Heart right ventricle (tissue), 16 donors: ENCODE measurements at regions of chr12 and their contacts with region 1.

Region 1: DNA sequence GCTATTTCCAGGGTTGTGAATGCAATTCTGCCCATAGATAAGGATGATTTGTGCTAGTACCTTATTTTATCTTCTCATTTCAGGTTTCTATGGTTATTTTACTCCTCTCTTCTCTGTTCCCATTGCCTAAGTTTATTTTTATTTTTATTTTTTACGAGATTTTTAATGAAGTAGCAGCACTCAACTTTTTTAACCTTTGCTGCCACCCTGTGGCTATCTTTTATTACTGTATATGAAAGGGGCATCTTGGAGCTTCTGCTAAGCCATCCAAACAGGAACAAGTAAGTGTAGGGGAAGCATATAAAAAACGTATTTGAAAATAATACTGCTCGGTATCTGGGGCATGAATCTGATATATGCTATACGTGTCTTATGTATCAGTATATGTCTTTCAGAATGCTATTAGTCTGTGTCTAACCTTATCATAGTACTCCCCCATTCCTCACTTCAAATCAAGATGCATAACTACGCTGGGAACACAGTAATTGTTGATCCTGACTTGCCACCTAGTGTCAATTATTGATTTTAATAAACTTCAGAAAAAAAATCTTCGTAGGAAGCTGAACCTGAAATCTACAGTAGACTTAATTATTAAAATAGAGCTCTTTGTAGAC is 60.3 kb downstream of the KLRG1 start:
- DNase-seq: no peak
- ATAC-seq: peak in 3 of 8 donors; percentile 22 to 53 (median 42)
- H3K4me3 ChIP-seq: no peak overlapping the region
- H3K27ac ChIP-seq: no peak overlapping the region
- H3K4me1 ChIP-seq: peaks cover 0 to 4% (median 0%) of the 10 kb centered on the region in 9 donors
- H3K27me3 ChIP-seq: no peaks in the 10 kb centered on the region
- CTCF ChIP-seq: peak in 8 of 9 donors; percentile 9 to 69 (median 60)

Region 2: GRCh38 chr12:8544295-8544694 is 505.3 kb before region 1 on chr12:
- intact Hi-C with region 1: loop called in 5 of 10 experiments (anchors 5 to 10 kb)
- DNase-seq: peak in 1 of 2 donors; percentile 60
- ATAC-seq: peak in 6 of 8 donors; percentile 63 to 78 (median 68)
- H3K4me3 ChIP-seq: no peak overlapping the region
- H3K27ac ChIP-seq: no peak overlapping the region
- H3K4me1 ChIP-seq: peaks cover 0 to 13% (median 0%) of the 10 kb centered on the region in 9 donors
- H3K27me3 ChIP-seq: peaks cover 0 to 20% (median 4%) of the 10 kb centered on the region in 7 donors
- CTCF ChIP-seq: peak; percentile 83 to 96 (median 93)

Region 3: GRCh38 chr12:8549381-8549780 is 500.2 kb before region 1 on chr12:
- intact Hi-C with region 1: loop called in 5 of 10 experiments (anchors 5 to 10 kb)
- DNase-seq: no peak
- ATAC-seq: no peak
- H3K4me3 ChIP-seq: no peak overlapping the region
- H3K27ac ChIP-seq: no peak overlapping the region
- H3K4me1 ChIP-seq: peaks cover 0 to 5% (median 0%) of the 10 kb centered on the region in 9 donors
- H3K27me3 ChIP-seq: peaks cover 0 to 5% (median 0%) of the 10 kb centered on the region in 7 donors
- CTCF ChIP-seq: no peak

Region 4: GRCh38 chr12:8658346-8658745 is 391.3 kb before region 1 on chr12:
- intact Hi-C with region 1: loop called in 1 of 10 experiments (anchors 10 kb)
- DNase-seq: no peak
- ATAC-seq: peak in 1 of 8 donors; percentile 26
- H3K4me3 ChIP-seq: no peak overlapping the region
- H3K27ac ChIP-seq: no peak overlapping the region
- H3K4me1 ChIP-seq: peaks cover 0 to 2% (median 0%) of the 10 kb centered on the region in 9 donors
- H3K27me3 ChIP-seq: no peaks in the 10 kb centered on the region
- CTCF ChIP-seq: no peak

Region 5: DNA sequence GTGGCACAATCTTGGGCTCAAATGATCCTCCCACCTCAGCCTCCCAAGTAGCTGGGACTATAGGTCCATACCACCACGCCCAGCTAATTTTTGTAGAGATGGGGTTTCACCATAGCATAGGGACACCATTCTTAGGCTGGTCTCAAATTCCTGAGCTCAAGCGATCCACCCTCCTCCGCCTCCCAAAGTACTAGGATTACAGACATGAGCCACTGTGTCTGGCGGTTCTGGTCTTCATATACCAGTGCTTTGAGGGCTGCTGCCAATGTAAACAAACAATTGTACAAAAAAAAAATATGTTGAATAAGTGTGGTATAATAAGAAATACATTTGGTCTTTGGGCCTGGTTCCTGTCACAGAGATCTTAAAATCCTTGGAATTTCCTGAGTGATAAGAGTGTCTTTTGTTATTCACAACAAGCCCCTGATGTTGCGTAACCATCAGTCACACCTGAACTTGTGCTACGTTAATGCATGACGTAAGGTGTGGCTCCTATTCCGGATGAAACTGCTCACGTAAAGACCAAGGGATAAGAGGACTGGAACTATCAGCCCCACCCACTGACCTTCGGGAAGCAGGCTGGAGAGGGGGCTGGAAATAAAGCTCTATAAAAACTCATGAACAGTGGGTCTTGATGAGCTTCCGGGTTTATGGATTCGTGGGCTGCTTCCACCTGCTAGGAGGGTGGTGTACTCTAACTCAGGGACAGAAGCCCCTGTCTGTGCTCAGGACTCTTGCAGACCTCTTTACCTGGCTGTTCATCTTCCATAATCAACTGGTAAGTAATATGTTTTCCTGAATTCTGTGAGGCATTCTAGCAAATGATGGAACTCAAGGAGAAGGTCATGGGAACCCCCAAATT is 368.4 kb before region 1 on chr12:
- intact Hi-C with region 1: loop called in 9 of 10 experiments (anchors 5 to 10 kb)
- DNase-seq: peak in 1 of 2 donors; percentile 32
- ATAC-seq: peak; percentile 27 to 91 (median 79)
- H3K4me3 ChIP-seq: peak overlapping the region in 4 of 10 donors; percentile 16 to 28 (median 24)
- H3K27ac ChIP-seq: peak overlapping the region in 9 of 10 donors; percentile 20 to 75 (median 61)
- H3K4me1 ChIP-seq: peaks cover 0 to 25% (median 6%) of the 10 kb centered on the region in 9 donors
- H3K27me3 ChIP-seq: no peaks in the 10 kb centered on the region
- CTCF ChIP-seq: no peak